Activated CD4-positive, alpha-beta memory T cell treated with anti-CD3 and anti-CD28 coated beads, Interleukin-2, amount 10 ng/mL, durations not matched to agents 7 days and 5 days (primary cell): ENCODE measurements at regions of chr1 and their contacts with region 1.

Region 1: GRCh38 chr1:44730741-44731512 is at the start of gene RNU5D-1:
- DNase-seq: peak; percentile 95
- H3K4me3 Mint-ChIP-seq: peak within 1 kb of the TSS; percentile 62
- H3K27ac Mint-ChIP-seq: peak within 1 kb of the TSS; percentile 99
- H3K4me1 Mint-ChIP-seq: peaks cover 35% of the 10 kb centered on the region
- H3K27me3 Mint-ChIP-seq: peaks cover 4% of the 10 kb centered on the region
- total RNA-seq, gene RNU5D-1: not detected

Region 2: GRCh38 chr1:44631647-44632539 is 99.0 kb before region 1 on chr1:
- CTCF ChIA-PET with region 1: interaction called, 3 read pairs
- POLR2A ChIA-PET with region 1: interaction called, 13 read pairs
- DNase-seq: peak; percentile 93
- H3K4me3 Mint-ChIP-seq: peak overlapping the region; percentile 90
- H3K27ac Mint-ChIP-seq: peak overlapping the region; percentile 93
- H3K4me1 Mint-ChIP-seq: peaks cover 40% of the 10 kb centered on the region
- H3K27me3 Mint-ChIP-seq: no peaks in the 10 kb centered on the region

Region 3: DNA sequence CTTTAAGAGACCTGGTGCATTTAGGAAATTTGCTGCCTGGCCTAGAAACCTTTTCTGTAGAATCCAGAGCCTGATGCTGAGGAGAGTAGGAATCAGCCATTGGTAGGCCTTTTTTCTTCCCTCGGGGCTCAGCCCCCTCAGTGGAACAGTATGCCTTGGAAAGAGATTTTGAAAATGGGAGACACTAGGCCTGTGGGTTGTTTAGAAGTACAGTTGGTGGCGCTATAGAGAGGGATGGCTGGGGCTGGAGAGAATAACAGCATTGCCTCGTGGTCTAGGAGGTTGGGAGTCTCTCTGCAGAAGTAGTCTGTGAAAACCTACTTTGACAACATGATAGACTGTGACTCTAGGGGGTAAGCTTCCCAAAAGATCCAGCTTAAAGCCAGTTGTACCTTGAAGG is 17.0 kb after region 1 on chr1:
- CTCF ChIA-PET with region 1: interaction called, 15 read pairs
- POLR2A ChIA-PET with region 1: interaction called, 174 read pairs
- DNase-seq: no peak
- H3K4me3 Mint-ChIP-seq: no peak overlapping the region
- H3K27ac Mint-ChIP-seq: peak overlapping the region; percentile 40
- H3K4me1 Mint-ChIP-seq: peaks cover 36% of the 10 kb centered on the region
- H3K27me3 Mint-ChIP-seq: no peaks in the 10 kb centered on the region

Region 4: DNA sequence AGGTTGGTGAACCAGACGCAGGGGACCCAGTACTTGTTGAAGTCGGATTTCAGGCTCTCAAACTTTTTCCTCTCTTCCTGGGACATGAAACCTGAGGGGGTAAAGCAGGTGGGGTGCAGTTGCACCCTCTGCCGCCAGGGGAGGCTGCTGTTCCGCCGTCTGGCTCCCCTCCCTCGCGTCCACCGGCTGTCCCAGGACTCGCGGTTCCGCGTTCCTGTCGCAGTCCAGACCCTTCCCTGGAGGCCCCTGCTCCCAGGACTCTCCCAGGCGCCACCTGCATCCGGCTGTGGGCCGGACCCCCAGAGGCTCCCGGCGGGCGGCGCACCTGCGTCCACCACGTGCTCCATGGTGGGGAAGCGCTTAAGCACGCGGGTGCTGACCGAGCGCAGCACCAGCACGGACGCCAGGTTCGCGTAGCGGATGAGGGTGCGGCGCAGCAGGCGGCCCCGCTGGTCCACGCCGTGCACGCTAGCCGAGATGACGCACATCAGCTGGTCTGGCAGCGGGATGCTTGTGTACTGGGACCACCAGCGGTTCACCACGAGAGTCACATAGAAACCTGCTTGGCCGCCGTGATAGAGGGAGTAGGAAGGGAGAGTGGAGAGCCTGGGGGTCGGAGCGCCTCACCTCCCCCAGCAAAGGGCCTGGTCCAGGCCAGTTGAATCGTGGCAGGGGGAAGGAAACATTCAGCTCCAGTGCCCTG is 55.4 kb after region 1 on chr1:
- CTCF ChIA-PET with region 1: interaction called, 12 read pairs
- POLR2A ChIA-PET with region 1: interaction called, 454 read pairs
- DNase-seq: peak; percentile 78
- H3K4me3 Mint-ChIP-seq: peak overlapping the region; percentile 59
- H3K27ac Mint-ChIP-seq: no peak overlapping the region
- H3K4me1 Mint-ChIP-seq: peaks cover 36% of the 10 kb centered on the region
- H3K27me3 Mint-ChIP-seq: no peaks in the 10 kb centered on the region

Region 5: DNA sequence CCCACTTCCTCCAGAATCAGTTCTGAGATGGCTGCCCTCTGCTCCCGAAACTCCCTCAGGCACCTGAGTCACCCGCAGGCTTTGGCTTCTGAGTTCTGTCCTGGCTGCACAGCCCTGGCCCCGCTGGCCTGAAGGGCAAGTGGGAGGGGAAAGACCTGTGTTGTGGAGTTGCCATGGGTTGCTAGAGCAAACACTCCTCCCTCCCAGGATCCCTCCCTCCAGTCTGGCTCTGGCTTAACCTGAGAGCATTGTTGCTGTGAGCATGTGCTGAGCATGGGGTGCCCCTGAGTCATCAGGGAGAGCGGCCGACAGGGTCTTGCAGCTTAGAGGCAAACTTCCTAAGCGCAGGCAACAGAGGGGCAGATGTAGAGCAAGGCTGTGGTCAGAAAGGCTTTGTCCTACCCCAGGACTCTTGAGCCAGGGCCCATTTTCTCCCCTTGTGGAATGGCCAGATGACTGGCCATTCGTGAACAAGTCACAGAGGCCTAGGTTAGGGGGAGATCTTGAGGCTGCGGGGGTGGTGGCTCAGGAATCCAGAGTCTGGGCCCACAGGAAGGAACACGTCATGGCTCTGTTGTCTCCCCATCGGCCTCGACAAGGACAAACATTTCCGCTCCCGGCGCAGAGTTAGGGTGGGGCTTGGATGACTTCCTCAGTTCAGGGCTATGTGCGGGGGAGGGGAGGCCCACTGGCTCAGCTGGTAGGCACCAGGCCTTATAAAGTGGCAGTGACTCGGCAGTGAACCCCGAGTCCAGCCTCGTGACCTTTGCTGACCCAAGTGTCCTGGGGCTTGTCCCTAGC is 76.5 kb after region 1 on chr1 and contains the start of gene DYNLT4:
- CTCF ChIA-PET with region 1: interaction called, 16 read pairs
- POLR2A ChIA-PET with region 1: interaction called, 125 read pairs
- DNase-seq: peak; percentile 93
- H3K4me3 Mint-ChIP-seq: peak within 1 kb of the TSS; percentile 73
- H3K27ac Mint-ChIP-seq: peak within 1 kb of the TSS; percentile 98
- H3K4me1 Mint-ChIP-seq: peaks cover 92% of the 10 kb centered on the region
- H3K27me3 Mint-ChIP-seq: no peaks in the 10 kb centered on the region
- total RNA-seq, gene DYNLT4: 1.9 to 2.2 TPM

Region 6: DNA sequence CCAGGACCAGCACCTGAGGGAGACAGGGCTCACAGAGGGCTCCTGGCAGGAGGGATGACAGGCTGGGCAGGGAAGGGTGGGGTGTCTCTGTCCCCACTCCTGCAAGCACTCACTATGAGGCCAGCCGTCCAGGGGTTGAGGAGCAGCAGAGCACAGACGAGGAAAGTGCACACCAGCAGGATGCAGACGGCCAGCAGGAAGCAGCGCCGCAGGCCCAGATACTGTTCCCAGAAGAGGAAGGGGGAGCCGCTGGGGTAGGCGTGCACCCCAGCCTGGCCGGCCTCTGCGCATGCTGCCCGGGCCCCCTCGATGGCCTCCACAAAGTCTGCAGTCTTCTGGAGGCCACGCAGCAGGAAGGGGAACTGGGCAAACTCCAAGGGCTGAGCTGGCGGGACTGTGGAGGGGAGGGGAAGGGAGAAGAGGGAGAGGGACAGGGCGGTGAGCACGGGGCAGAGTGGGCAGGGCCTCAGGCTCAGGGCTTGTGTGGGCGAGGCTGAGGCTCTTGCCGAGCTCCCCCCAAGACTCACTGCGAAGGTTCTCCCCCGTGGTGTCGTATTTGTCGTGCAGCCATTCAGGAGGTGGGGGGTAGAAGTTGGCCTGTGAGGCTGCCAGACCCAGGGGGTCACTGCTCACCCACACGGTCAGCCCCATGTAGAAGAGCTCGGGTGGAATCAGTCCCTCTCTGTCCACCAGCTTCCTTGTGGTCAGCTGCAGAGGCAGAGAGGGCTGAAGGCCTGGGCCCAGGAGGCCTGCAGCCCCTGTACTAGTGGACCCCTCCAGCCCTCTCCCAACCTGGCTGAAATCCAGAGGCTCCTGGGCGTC is 95.7 kb after region 1 on chr1:
- CTCF ChIA-PET with region 1: interaction called, 4 read pairs
- POLR2A ChIA-PET with region 1: interaction called, 229 read pairs
- DNase-seq: no peak
- H3K4me3 Mint-ChIP-seq: no peak overlapping the region
- H3K27ac Mint-ChIP-seq: no peak overlapping the region
- H3K4me1 Mint-ChIP-seq: peaks cover 4% of the 10 kb centered on the region
- H3K27me3 Mint-ChIP-seq: no peaks in the 10 kb centered on the region

Region 7: DNA sequence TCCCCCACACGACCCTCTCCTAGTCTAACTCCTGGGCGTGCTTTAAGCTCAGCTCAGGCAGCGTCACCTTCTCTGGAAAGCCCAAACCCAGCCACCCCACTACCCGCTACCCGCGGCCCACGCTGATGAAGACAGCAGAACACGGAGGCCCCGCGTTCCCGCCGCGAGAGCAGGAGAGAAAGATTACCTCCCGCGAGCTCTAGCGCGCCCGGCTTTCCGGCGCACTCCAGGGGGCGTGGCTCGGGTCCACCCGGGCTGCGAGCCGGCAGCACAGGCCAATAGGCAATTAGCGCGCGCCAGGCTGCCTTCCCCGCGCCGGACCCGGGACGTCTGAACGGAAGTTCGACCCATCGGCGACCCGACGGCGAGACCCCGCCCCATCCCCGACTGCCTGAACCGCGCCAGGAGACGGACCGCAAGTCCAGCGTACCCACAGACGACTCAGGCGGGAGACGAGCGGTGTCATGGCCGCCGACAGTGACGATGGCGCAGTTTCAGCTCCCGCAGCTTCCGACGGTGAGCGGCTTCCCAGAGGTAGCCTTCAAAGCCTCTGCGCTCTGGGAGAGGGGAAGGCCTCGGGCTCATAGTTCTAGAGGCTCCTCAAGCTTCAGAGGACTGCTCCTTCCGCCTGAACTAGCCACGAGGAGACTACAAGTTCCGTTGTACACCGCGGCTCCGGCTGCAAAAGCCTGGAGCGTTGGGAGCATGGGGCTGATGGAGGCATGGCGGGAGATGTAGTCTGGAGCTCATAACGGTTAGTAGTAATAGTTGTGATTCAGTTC is 609.1 kb after region 1 on chr1 and contains the starts of genes MUTYH and TOE1:
- CTCF ChIA-PET with region 1: interaction called, 5 read pairs
- POLR2A ChIA-PET with region 1: interaction called, 12 read pairs
- DNase-seq: peak; percentile 96
- H3K4me3 Mint-ChIP-seq: peak within 1 kb of the TSS; percentile 96
- H3K27ac Mint-ChIP-seq: peak within 1 kb of the TSS; percentile 100
- H3K4me1 Mint-ChIP-seq: peaks cover 58% of the 10 kb centered on the region
- H3K27me3 Mint-ChIP-seq: no peaks in the 10 kb centered on the region
- total RNA-seq, gene MUTYH: 37.2 to 39.2 TPM
- total RNA-seq, gene TOE1: 16.6 to 18.3 TPM